ENCODE measurements at regions of chr13 and their contacts with region 1.

Region 1: DNA sequence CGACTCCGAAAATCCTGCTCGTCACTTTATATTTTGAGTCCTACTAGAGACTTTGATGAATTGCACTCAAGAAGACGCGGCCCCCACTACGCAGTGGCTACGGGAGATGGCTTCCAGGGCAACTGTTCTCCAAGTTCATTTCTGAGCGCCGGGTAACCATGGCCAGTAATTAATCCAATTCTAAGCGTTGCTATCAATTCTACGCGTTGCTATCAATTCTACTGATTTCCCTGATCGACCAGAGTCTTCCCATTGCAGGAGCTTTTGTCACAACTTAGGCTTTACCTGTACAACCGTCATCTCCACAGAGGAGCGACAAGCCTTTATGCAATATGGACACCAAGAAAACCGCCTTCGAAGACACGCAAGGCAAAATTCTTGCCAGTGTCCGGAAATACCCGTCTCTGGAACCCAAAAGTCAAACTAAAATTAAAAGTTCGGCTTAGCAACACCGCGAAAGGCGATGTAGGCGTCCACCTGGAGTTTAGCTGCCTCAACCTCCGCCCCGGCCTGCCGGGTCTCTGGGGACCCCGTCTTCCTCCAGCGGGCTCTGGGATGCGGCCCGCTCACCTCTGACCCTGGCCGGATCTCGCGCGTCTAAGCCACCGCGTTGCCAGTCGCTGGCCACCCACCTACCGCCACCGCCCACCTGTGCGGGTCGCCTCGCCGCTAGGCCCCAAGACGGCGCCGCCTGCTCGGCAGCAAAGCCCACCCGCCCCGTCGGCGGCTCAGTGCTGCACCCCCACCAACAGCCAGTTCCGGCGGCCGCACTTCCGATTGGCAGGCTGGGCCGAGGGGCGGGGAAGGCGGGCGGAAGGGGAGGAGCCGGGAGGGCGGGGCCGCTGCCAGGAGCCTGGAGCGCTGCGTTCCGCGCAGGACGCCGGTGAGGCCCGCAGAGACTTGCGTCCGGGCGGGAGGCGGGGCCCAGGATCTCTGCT is at the start of gene SUPT20H:
- DNase-seq: peak; percentile 83
- ATAC-seq: peak; percentile 95
- H3K4me3 ChIP-seq: peak within 1 kb of the TSS; percentile 83
- H3K27ac ChIP-seq: peak within 1 kb of the TSS; percentile 36; the same call in 1 of the 2 replicates
- H3K4me1 ChIP-seq: peaks cover 5% of the 10 kb centered on the region
- H3K27me3 ChIP-seq: no peaks in the 10 kb centered on the region
- CTCF ChIP-seq: no peak
- total RNA-seq, gene SUPT20H: 16.8 and 18.1 TPM in 2 replicates

Region 2: DNA sequence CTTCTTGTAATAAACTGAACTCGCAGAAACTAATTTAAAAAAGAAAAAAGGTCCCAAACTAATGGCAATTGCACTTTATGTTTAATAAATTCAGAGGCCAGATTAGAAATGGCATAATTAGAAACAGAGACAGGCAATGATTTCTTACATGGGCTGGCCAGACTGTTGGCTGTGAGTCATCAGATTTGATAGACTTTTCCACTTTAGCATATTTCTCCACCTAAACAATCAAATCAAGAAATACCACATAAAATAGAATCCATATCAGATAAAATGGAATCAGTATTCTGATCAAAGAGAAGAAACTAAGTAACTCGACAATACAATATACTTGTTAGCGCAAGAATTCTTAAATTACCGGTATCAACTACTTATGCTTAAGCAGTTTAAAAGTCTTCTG is 29.6 kb before region 1 on chr13:
- CTCF ChIA-PET with region 1: no interaction called
- POLR2A ChIA-PET with region 1: no interaction called
- intact Hi-C with region 1: loop called (anchors 2 kb)
- DNase-seq: no peak
- ATAC-seq: peak; percentile 50
- H3K4me3 ChIP-seq: no peak overlapping the region
- H3K27ac ChIP-seq: no peak overlapping the region
- H3K4me1 ChIP-seq: peaks cover 6% of the 10 kb centered on the region; the same call in 1 of the 2 replicates
- H3K27me3 ChIP-seq: no peaks in the 10 kb centered on the region
- CTCF ChIP-seq: no peak